GM12878 (cell line): ENCODE measurements at regions of chr4 and their contacts with region 1.

Region 1: GRCh38 chr4:122914292-122914904 is 8.0 kb downstream of the NUDT6 start:
- DNase-seq: peak; percentile 8
- ATAC-seq: peak; percentile 91
- H3K4me3 ChIP-seq: no peak overlapping the region
- H3K27ac ChIP-seq: no peak overlapping the region
- H3K4me1 ChIP-seq: no peaks in the 10 kb centered on the region
- H3K27me3 ChIP-seq: no peaks in the 10 kb centered on the region
- CTCF ChIP-seq: peak; percentile 33 to 67 (median 46); a peak in 5 of 6 replicates
- EP300 ChIP-seq: no peak
- POLR2A ChIP-seq: no peak
- RAD21 ChIP-seq: peak; percentile 74

Region 2: DNA sequence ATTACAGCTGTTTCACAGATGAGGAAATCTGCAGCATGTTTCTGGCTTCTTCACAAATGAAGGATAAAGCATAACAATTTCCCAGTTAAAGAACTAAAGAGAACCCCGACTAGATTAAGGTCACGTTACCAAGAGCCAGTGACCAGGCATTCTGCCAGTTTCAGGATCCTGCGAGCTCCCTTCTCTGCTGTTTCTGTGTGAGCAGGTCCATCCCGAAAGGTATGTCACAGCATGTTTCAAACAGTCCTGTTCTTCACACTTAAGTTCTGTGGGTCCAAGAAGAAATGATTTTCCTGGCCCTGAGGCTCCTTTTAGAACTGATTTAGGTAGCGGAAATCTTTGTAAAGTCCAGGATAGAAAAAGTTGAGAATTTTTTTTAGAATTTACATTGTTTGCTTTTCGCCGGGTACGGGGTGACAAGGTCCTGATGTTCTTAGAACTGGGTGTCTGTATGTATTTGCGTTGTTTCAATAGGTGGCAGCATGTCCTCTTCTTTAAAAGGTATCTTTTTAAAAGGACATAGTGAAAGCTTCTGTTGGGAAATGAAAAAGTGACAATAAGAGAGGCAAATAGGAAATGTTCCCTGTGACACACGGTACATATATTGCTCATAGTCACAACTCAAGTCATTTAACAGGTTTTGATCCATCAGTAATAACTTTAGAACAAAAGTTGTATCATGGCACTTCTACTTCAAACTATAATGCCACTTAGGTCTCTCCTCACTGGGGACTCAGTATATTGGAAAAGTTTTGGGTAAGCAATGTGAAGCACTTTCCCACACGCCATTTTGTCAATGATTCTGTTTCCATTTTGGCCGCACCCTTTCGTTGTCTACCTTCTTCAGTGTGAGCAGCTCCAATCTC is 311.9 kb before region 1 on chr4:
- CTCF ChIA-PET with region 1: interaction called, 19 read pairs
- POLR2A ChIA-PET with region 1: no interaction called
- RAD21 ChIA-PET with region 1: interaction called, 6 read pairs
- SMC1A ChIA-PET with region 1: no interaction called
- in situ Hi-C with region 1: loop called (anchors 10 kb)
- intact Hi-C with region 1: loop called (anchors 5 kb)
- DNase-seq: no peak
- ATAC-seq: peak; percentile 85
- H3K4me3 ChIP-seq: no peak overlapping the region
- H3K27ac ChIP-seq: no peak overlapping the region
- H3K4me1 ChIP-seq: no peaks in the 10 kb centered on the region
- H3K27me3 ChIP-seq: peaks cover 0 to 7% of the 10 kb centered on the region in 2 experiments; a peak in 3 of 4 replicates
- CTCF ChIP-seq: peak; percentile 31 to 61 (median 47); a peak in 5 of 6 replicates
- EP300 ChIP-seq: no peak
- POLR2A ChIP-seq: no peak
- RAD21 ChIP-seq: peak; percentile 73

Region 3: DNA sequence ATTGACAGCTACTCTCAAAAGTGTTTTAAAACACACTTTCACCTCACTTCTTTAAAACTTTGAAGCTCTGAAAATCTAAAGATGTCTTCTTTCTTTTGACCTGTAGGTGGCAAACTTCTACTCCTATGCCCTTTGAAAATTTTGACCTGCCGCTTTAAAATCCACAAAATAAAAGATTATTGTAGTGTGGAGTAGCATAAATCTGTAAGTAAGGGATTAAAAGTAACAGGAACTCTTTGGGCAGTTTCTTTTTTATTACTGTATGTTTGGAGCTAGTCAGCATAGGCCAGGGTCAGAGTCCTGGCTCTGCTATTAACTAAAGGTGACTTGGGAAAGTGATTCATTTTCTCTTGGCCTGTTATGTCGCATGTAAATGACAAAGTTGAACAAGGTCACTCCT is 156.4 kb before region 1 on chr4:
- CTCF ChIA-PET with region 1: interaction called, 124 read pairs
- POLR2A ChIA-PET with region 1: no interaction called
- RAD21 ChIA-PET with region 1: interaction called, 34 read pairs
- SMC1A ChIA-PET with region 1: interaction called, 73 read pairs
- in situ Hi-C with region 1: no loop called
- intact Hi-C with region 1: loop called (anchors 1 kb)
- DNase-seq: no peak
- ATAC-seq: peak; percentile 56
- H3K4me3 ChIP-seq: no peak overlapping the region
- H3K27ac ChIP-seq: no peak overlapping the region
- H3K4me1 ChIP-seq: peaks cover 6% of the 10 kb centered on the region; the same call in 1 of the 2 replicates
- H3K27me3 ChIP-seq: no peaks in the 10 kb centered on the region
- CTCF ChIP-seq: peak; percentile 43 to 60 (median 55); a peak in 5 of 6 replicates
- EP300 ChIP-seq: no peak
- POLR2A ChIP-seq: no peak
- RAD21 ChIP-seq: peak; percentile 76

Region 4: DNA sequence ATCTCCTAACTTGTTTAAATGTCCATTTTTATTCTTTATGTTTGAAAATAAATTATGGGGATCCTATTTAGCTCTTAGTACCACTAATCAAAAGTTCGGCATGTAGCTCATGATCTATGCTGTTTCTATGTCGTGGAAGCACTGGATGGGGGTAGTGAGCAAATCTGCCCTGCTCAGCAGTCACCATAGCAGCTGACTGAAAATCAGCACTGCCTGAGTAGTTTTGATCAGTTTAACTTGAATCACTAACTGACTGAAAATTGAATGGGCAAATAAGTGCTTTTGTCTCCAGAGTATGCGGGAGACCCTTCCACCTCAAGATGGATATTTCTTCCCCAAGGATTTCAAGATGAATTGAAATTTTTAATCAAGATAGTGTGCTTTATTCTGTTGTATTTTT is 19.6 kb before region 1 on chr4:
- CTCF ChIA-PET with region 1: interaction called, 15 read pairs
- POLR2A ChIA-PET with region 1: no interaction called
- RAD21 ChIA-PET with region 1: interaction called, 3 read pairs
- SMC1A ChIA-PET with region 1: interaction called, 4 read pairs
- in situ Hi-C with region 1: no loop called
- intact Hi-C with region 1: no loop called
- DNase-seq: no peak
- ATAC-seq: no peak
- H3K4me3 ChIP-seq: no peak overlapping the region
- H3K27ac ChIP-seq: no peak overlapping the region
- H3K4me1 ChIP-seq: no peaks in the 10 kb centered on the region
- H3K27me3 ChIP-seq: no peaks in the 10 kb centered on the region
- CTCF ChIP-seq: no peak
- EP300 ChIP-seq: no peak
- POLR2A ChIP-seq: no peak
- RAD21 ChIP-seq: no peak

Region 5: DNA sequence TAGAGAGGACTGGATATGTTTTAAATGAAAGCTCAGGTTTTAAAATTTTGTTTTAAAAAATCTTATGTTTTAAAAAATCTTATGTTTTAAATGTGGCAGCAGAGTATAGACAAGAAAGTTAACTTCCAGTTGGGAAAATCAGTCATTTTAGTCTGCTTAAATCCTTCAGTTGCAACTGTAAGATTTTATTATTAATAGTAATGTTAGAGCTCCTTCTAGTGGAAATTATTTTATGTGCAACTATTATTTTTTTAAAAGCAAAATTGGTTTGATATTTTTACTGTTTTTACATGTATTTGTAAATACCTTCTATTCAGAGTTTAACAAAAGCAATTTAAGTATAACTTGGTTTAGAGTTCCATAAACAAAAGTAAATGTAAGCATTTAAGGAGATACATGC is 16.5 kb after region 1 on chr4:
- CTCF ChIA-PET with region 1: interaction called, 31 read pairs
- POLR2A ChIA-PET with region 1: no interaction called
- RAD21 ChIA-PET with region 1: interaction called, 10 read pairs
- SMC1A ChIA-PET with region 1: interaction called, 6 read pairs
- in situ Hi-C with region 1: no loop called
- intact Hi-C with region 1: no loop called
- DNase-seq: no peak
- ATAC-seq: no peak
- H3K4me3 ChIP-seq: no peak overlapping the region
- H3K27ac ChIP-seq: no peak overlapping the region
- H3K4me1 ChIP-seq: no peaks in the 10 kb centered on the region
- H3K27me3 ChIP-seq: no peaks in the 10 kb centered on the region
- CTCF ChIP-seq: peak in 2 of 3 experiments; percentile 21 to 46; a peak in 3 of 6 replicates
- EP300 ChIP-seq: no peak
- POLR2A ChIP-seq: no peak
- RAD21 ChIP-seq: peak; percentile 20; the same call in 1 of the 2 replicates

Region 6: GRCh38 chr4:123966990-123967769 is 1052.8 kb after region 1 on chr4:
- CTCF ChIA-PET with region 1: no interaction called
- POLR2A ChIA-PET with region 1: no interaction called
- RAD21 ChIA-PET with region 1: no interaction called
- SMC1A ChIA-PET with region 1: no interaction called
- in situ Hi-C with region 1: no loop called
- intact Hi-C with region 1: no loop called
- DNase-seq: no peak
- ATAC-seq: no peak
- H3K4me3 ChIP-seq: no peak overlapping the region
- H3K27ac ChIP-seq: no peak overlapping the region
- H3K4me1 ChIP-seq: no peaks in the 10 kb centered on the region
- H3K27me3 ChIP-seq: no peaks in the 10 kb centered on the region
- CTCF ChIP-seq: no peak
- EP300 ChIP-seq: no peak
- POLR2A ChIP-seq: no peak
- RAD21 ChIP-seq: no peak